ENCODE measurements at regions of chr20 and their contacts with region 1.

Region 1: DNA sequence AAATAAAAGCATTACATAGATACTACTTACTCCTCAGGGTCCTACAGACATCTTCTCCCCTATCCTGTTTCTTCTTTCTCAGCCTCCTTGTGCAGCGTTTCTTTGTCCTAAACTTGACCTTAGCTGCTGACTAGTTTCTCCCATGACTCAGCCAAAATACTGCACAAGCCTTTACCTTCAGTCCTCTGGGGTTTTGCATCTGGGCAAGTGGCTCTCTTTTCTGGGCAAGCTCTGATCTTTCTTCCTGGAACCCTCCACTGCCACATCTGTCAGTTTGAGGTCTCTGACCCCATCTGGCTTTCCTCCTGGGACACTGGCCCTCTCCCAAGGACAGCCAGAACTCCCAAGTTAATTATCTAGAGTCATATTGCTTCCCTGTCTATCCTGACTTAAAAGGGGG is 838.4 kb downstream of the DHX35 start:
- DNase-seq: peak; percentile 80
- H3K4me3 ChIP-seq: no peak overlapping the region
- H3K27ac ChIP-seq: peak overlapping the region; percentile 81
- H3K4me1 ChIP-seq: peaks cover 14% of the 10 kb centered on the region
- H3K27me3 ChIP-seq: no peaks in the 10 kb centered on the region
- CTCF ChIP-seq: no peak

Region 2: GRCh38 chr20:39849664-39850063 is 49.1 kb after region 1 on chr20:
- CTCF ChIA-PET with region 1: no interaction called
- dilution Hi-C with region 1: no loop called
- in situ Hi-C with region 1: no loop called
- intact Hi-C with region 1: loop called (anchors 5 kb)
- DNase-seq: peak; percentile 88
- H3K4me3 ChIP-seq: no peak overlapping the region
- H3K27ac ChIP-seq: no peak overlapping the region
- H3K4me1 ChIP-seq: peaks cover 33% of the 10 kb centered on the region
- H3K27me3 ChIP-seq: no peaks in the 10 kb centered on the region
- CTCF ChIP-seq: no peak

Region 3: DNA sequence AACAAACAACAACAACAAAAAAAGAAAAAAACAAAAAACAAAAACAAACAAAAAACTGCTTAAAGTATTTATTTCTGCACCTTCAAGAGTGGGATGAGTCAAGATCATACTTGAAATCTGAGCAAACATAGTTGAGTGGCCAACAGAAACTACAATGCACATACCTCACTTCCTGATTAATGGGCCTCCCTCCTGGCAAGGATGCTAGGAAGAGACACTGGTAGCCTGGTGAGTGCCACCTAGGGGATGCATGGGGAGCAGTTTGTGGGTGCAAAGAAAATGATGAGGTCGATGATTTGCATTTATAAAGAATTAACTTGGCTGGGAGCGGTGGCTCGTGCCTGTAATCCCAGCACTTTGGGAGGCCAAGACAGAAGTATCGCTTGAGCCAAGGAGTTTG is 80.3 kb after region 1 on chr20:
- CTCF ChIA-PET with region 1: no interaction called
- dilution Hi-C with region 1: no loop called
- in situ Hi-C with region 1: no loop called
- intact Hi-C with region 1: no loop called
- DNase-seq: peak; percentile 62
- H3K4me3 ChIP-seq: no peak overlapping the region
- H3K27ac ChIP-seq: no peak overlapping the region
- H3K4me1 ChIP-seq: peaks cover 12% of the 10 kb centered on the region
- H3K27me3 ChIP-seq: no peaks in the 10 kb centered on the region
- CTCF ChIP-seq: peak; percentile 32 to 61

Measured in mammary epithelial cell (primary cell).